ENCODE measurements at regions of chr14 and their contacts with region 1.

Region 1: GRCh38 chr14:104639889-104640548 is 35.4 kb upstream of the TMEM179 start:
- DNase-seq: peak; percentile 81
- H3K4me3 ChIP-seq: no peak overlapping the region
- H3K27ac ChIP-seq: no peak overlapping the region
- H3K4me1 ChIP-seq: peaks cover 15% of the 10 kb centered on the region
- H3K27me3 ChIP-seq: no peaks in the 10 kb centered on the region
- CTCF ChIP-seq: peak; percentile 98

Region 2: GRCh38 chr14:104094709-104095438 is 545.1 kb before region 1 on chr14:
- CTCF ChIA-PET with region 1: no interaction called
- POLR2A ChIA-PET with region 1: no interaction called
- intact Hi-C with region 1: loop called (anchors 5 kb)
- DNase-seq: peak; percentile 79
- H3K4me3 ChIP-seq: no peak overlapping the region
- H3K27ac ChIP-seq: no peak overlapping the region
- H3K4me1 ChIP-seq: peaks cover 8% of the 10 kb centered on the region
- H3K27me3 ChIP-seq: no peaks in the 10 kb centered on the region
- CTCF ChIP-seq: peak; percentile 97

Region 3: GRCh38 chr14:104383996-104384775 is 255.8 kb before region 1 on chr14:
- CTCF ChIA-PET with region 1: no interaction called
- POLR2A ChIA-PET with region 1: no interaction called
- intact Hi-C with region 1: no loop called
- DNase-seq: no peak
- H3K4me3 ChIP-seq: no peak overlapping the region
- H3K27ac ChIP-seq: no peak overlapping the region
- H3K4me1 ChIP-seq: peaks cover 5% of the 10 kb centered on the region
- H3K27me3 ChIP-seq: peaks cover 6% of the 10 kb centered on the region
- CTCF ChIP-seq: no peak